IMR-90 (cell line): ENCODE measurements at regions of chr13 and their contacts with region 1.

Region 1: DNA sequence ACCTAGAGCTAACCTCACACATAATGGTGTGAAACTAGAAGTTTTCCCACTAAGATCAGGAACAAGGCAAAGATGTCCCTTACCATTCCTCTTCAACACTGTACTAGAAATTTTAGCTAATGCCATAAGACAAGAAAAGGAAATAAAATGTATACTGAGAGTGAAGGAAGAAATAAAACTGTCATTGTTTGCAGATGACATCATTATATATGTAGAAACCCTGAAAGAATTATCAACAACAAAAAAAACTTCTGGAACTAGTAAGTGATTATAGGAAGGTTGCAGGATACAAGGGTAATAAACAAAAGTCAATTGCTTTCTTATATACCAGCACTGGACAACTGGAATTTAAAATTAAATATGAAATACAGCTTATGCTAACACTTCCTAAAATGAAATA is 93.7 kb downstream of the TNFSF11 start:
- DNase-seq: no peak
- ATAC-seq: no peak
- H3K4me3 ChIP-seq: no peak overlapping the region
- H3K27ac ChIP-seq: no peak overlapping the region
- H3K4me1 ChIP-seq: no peaks in the 10 kb centered on the region
- H3K27me3 ChIP-seq: peaks cover 1% of the 10 kb centered on the region; the same call in 1 of the 2 replicates
- CTCF ChIP-seq: no peak
- POLR2A ChIP-seq: no peak
- RAD21 ChIP-seq: no peak

Region 2: GRCh38 chr13:42022796-42023493 is 644.7 kb before region 1 on chr13:
- CTCF ChIA-PET with region 1: no interaction called
- POLR2A ChIA-PET with region 1: no interaction called
- dilution Hi-C with region 1: no loop called
- in situ Hi-C with region 1: no loop called
- intact Hi-C with region 1: no loop called
- DNase-seq: no peak
- ATAC-seq: no peak
- H3K4me3 ChIP-seq: no peak overlapping the region
- H3K27ac ChIP-seq: no peak overlapping the region
- H3K4me1 ChIP-seq: no peaks in the 10 kb centered on the region
- H3K27me3 ChIP-seq: no peaks in the 10 kb centered on the region
- CTCF ChIP-seq: no peak
- POLR2A ChIP-seq: no peak
- RAD21 ChIP-seq: no peak

Region 3: GRCh38 chr13:43664700-43665191 is 997.1 kb after region 1 on chr13:
- CTCF ChIA-PET with region 1: no interaction called
- POLR2A ChIA-PET with region 1: no interaction called
- dilution Hi-C with region 1: no loop called
- in situ Hi-C with region 1: no loop called
- intact Hi-C with region 1: loop called (anchors 5 kb)
- DNase-seq: peak; percentile 74
- ATAC-seq: peak; percentile 82
- H3K4me3 ChIP-seq: no peak overlapping the region
- H3K27ac ChIP-seq: peak overlapping the region; percentile 49
- H3K4me1 ChIP-seq: peaks cover 11% of the 10 kb centered on the region
- H3K27me3 ChIP-seq: no peaks in the 10 kb centered on the region
- CTCF ChIP-seq: no peak
- POLR2A ChIP-seq: no peak
- RAD21 ChIP-seq: no peak